Caco-2 (cell line): ENCODE measurements at regions of chr5 and their contacts with region 1.

Region 1: DNA sequence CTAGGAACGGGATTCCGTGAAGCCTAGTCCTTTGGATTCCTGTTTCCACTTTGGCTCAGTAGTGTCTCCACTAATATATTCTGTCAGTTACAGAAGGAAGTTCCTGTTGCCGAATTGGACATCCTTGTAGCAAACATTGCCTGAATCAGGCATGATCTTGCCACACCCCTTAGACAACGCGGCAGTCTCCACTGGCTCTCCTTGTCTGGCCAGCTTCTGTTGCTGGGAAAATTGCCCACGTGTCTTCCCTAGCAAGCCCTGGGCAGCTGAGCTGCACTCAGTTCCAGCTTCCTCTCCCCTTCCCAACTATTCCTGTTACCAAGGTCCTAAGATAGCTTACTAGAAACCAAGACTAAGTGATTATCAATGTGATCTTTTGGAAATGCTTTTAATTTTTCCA is 316.6 kb upstream of the RIOK2 start:
- DNase-seq: no peak
- H3K4me3 ChIP-seq: no peak overlapping the region
- H3K4me3 Mint-ChIP-seq: no peak overlapping the region
- H3K27ac Mint-ChIP-seq: no peak overlapping the region
- H3K4me1 ChIP-seq: no peaks in the 10 kb centered on the region
- H3K4me1 Mint-ChIP-seq: no peaks in the 10 kb centered on the region
- H3K27me3 ChIP-seq: no peaks in the 10 kb centered on the region
- H3K27me3 Mint-ChIP-seq: no peaks in the 10 kb centered on the region
- CTCF ChIP-seq: no peak

Region 2: DNA sequence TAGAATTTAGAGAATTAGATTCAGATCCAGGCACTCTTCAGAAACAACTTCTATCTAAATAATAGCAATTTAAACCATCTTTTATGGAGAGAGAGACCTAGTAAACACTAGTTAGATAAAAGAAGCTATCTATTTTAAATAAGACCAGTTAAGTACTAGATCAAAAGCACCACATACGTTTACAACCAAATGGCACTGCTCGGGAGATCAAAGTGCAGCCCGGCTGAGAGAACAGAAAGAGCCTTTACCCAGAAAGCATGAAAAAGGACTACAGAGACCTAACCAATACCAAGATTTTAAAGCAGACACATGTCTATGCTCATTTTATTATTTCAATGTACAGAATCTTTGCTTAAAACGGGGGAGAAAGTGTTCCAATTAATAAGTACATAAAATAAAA is 388.0 kb before region 1 on chr5:
- CTCF ChIA-PET with region 1: no interaction called
- POLR2A ChIA-PET with region 1: no interaction called
- intact Hi-C with region 1: no loop called
- DNase-seq: peak; percentile 59 to 69
- H3K4me3 ChIP-seq: no peak overlapping the region
- H3K4me3 Mint-ChIP-seq: peak overlapping the region; percentile 3
- H3K27ac Mint-ChIP-seq: peak overlapping the region; percentile 3
- H3K4me1 ChIP-seq: peaks cover 27% of the 10 kb centered on the region
- H3K4me1 Mint-ChIP-seq: peaks cover 27% of the 10 kb centered on the region
- H3K27me3 ChIP-seq: no peaks in the 10 kb centered on the region
- H3K27me3 Mint-ChIP-seq: no peaks in the 10 kb centered on the region
- CTCF ChIP-seq: no peak

Region 3: GRCh38 chr5:97547999-97548738 is 48.6 kb after region 1 on chr5:
- CTCF ChIA-PET with region 1: no interaction called
- POLR2A ChIA-PET with region 1: no interaction called
- intact Hi-C with region 1: no loop called
- DNase-seq: no peak
- H3K4me3 ChIP-seq: no peak overlapping the region
- H3K4me3 Mint-ChIP-seq: no peak overlapping the region
- H3K27ac Mint-ChIP-seq: no peak overlapping the region
- H3K4me1 ChIP-seq: no peaks in the 10 kb centered on the region
- H3K4me1 Mint-ChIP-seq: no peaks in the 10 kb centered on the region
- H3K27me3 ChIP-seq: no peaks in the 10 kb centered on the region; the same call in 1 of the 2 replicates
- H3K27me3 Mint-ChIP-seq: no peaks in the 10 kb centered on the region
- CTCF ChIP-seq: no peak

Region 4: GRCh38 chr5:98200726-98201541 is 701.3 kb after region 1 on chr5:
- CTCF ChIA-PET with region 1: no interaction called
- POLR2A ChIA-PET with region 1: no interaction called
- intact Hi-C with region 1: loop called (anchors 5 kb)
- DNase-seq: no peak
- H3K4me3 ChIP-seq: no peak overlapping the region
- H3K4me3 Mint-ChIP-seq: no peak overlapping the region
- H3K27ac Mint-ChIP-seq: no peak overlapping the region
- H3K4me1 ChIP-seq: no peaks in the 10 kb centered on the region
- H3K4me1 Mint-ChIP-seq: no peaks in the 10 kb centered on the region
- H3K27me3 ChIP-seq: no peaks in the 10 kb centered on the region
- H3K27me3 Mint-ChIP-seq: no peaks in the 10 kb centered on the region
- CTCF ChIP-seq: no peak